ENCODE measurements at regions of chr17 and their contacts with region 1.

Region 1: DNA sequence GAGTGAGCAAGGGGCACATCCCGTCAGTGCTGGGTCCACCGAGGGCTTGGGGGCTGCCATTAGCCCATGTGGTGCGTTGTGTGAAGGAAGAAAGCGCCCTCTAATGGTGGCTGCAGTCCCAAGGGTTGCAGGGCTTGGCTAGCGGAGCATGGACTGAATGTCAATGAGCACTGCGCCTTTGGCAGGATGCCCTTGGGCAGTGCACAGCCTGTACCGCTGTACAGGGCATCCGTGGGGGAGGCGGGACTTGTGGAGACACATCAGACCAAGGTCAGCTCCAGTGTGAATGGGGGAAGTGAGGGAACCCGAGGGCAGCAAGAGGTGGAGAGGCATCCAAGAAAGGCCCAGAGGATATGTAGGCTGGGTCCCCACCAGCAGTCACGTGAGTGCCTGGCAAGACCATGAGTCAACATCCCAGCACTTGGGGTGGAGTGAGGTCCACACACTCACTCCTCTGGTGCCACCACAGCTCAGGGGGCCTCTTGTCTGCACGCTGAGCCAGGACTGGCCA is 75.5 kb upstream of the MED9 start:
- DNase-seq: no peak
- ATAC-seq: no peak

Region 2: GRCh38 chr17:17344462-17345293 is 56.6 kb before region 1 on chr17:
- intact Hi-C with region 1: loop called in 1 of 2 experiments (anchors 10 kb)
- DNase-seq: no peak
- ATAC-seq: peak; percentile 24 to 29